ENCODE measurements at regions of chr15 and their contacts with region 1.

Region 1: GRCh38 chr15:96553006-96553405 is 222.5 kb downstream of the NR2F2 start:
- DNase-seq: no peak
- H3K4me3 ChIP-seq: no peak overlapping the region
- H3K27ac ChIP-seq: no peak overlapping the region
- H3K4me1 ChIP-seq: no peaks in the 10 kb centered on the region
- H3K27me3 ChIP-seq: no peaks in the 10 kb centered on the region
- CTCF ChIP-seq: no peak
- POLR2A ChIP-seq: no peak

Region 2: GRCh38 chr15:96503276-96503675 is 49.7 kb before region 1 on chr15:
- intact Hi-C with region 1: loop called in 1 of 2 experiments (anchors 2 kb)
- DNase-seq: no peak
- H3K4me3 ChIP-seq: no peak overlapping the region
- H3K27ac ChIP-seq: no peak overlapping the region
- H3K4me1 ChIP-seq: no peaks in the 10 kb centered on the region
- H3K27me3 ChIP-seq: no peaks in the 10 kb centered on the region
- CTCF ChIP-seq: no peak
- POLR2A ChIP-seq: no peak

Region 3: GRCh38 chr15:96889734-96890480 is 336.9 kb after region 1 on chr15:
- intact Hi-C with region 1: no loop called
- DNase-seq: peak in 2 of 7 donors; percentile 13 to 20
- H3K4me3 ChIP-seq: peak overlapping the region in 2 of 4 donors; percentile 14 to 49
- H3K27ac ChIP-seq: no peak overlapping the region
- H3K4me1 ChIP-seq: peaks cover 0 to 4% of the 10 kb centered on the region in 2 donors
- H3K27me3 ChIP-seq: no peaks in the 10 kb centered on the region
- CTCF ChIP-seq: no peak
- POLR2A ChIP-seq: no peak

Measured in adrenal gland (tissue), 19 donors.